Thyroid gland (tissue), 4 donors: ENCODE measurements at regions of chr17 and their contacts with region 1.

Region 1: GRCh38 chr17:77088455-77089123 is 52.2 kb upstream of the SEC14L1 start:
- DNase-seq: peak; percentile 89
- H3K4me3 ChIP-seq: peak overlapping the region; percentile 47 to 64 (median 64)
- H3K27ac ChIP-seq: peak overlapping the region; percentile 72 to 80 (median 73)
- H3K4me1 ChIP-seq: peaks cover 16 to 28% of the 10 kb centered on the region in 2 donors
- H3K27me3 ChIP-seq: no peaks in the 10 kb centered on the region
- CTCF ChIP-seq: peak; percentile 35 to 64 (median 46)
- POLR2A ChIP-seq: peak in 1 of 2 donors; percentile 62

Region 2: DNA sequence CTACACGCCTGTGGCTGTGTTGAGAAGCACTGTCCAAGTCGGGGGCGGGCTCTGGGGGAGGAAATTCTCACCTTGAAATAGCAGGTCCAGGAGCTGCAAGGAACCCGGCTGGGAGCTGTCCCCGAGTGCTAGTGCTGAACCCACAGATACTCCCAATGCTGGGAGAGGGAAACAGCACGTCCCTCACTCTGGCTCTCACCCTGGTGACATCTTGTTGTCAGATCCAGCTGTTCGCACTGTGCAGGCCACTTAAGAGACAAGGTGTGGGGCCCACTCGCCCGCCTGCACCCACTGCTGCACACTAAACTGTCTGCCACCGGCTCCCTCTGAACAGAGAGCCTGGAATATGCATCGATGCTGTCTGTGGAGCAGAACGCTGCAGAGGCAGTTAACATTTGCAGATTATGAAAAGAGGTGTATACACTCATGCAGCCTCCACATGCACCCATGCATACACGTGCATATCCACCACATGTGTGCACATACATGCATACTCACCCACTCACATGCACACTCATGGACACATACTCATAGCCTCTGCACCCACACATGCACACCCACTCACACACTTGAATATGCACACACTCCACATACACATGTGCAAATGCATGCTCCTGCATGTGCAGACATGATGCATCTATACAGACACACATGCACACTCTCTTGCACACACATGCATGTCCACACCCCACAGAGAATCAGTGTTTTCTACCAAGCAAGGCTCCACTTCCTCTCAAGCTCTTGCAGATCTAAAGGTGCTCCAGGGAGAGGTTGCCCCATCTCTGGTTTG is 178.4 kb before region 1 on chr17:
- intact Hi-C with region 1: no loop called
- DNase-seq: peak; percentile 61 to 77
- H3K4me3 ChIP-seq: no peak overlapping the region
- H3K27ac ChIP-seq: no peak overlapping the region
- H3K4me1 ChIP-seq: no peaks in the 10 kb centered on the region
- H3K27me3 ChIP-seq: no peaks in the 10 kb centered on the region
- CTCF ChIP-seq: no peak
- POLR2A ChIP-seq: no peak

Region 3: GRCh38 chr17:76997981-76998531 is 90.5 kb before region 1 on chr17:
- intact Hi-C with region 1: no loop called
- DNase-seq: no peak
- H3K4me3 ChIP-seq: no peak overlapping the region
- H3K27ac ChIP-seq: no peak overlapping the region
- H3K4me1 ChIP-seq: no peaks in the 10 kb centered on the region
- H3K27me3 ChIP-seq: no peaks in the 10 kb centered on the region
- CTCF ChIP-seq: no peak
- POLR2A ChIP-seq: no peak

Region 4: GRCh38 chr17:77247048-77247541 is 158.5 kb after region 1 on chr17:
- intact Hi-C with region 1: loop called (anchors 5 kb)
- DNase-seq: peak; percentile 78 to 86
- H3K4me3 ChIP-seq: peak overlapping the region in 2 of 3 donors; percentile 25 to 36
- H3K27ac ChIP-seq: peak overlapping the region in 2 of 3 donors; percentile 48 to 49
- H3K4me1 ChIP-seq: peaks cover 4 to 12% of the 10 kb centered on the region in 2 donors
- H3K27me3 ChIP-seq: no peaks in the 10 kb centered on the region
- CTCF ChIP-seq: peak; percentile 89 to 99 (median 98)
- POLR2A ChIP-seq: no peak